Sigmoid colon (tissue), 7 donors: ENCODE measurements at regions of chr22 and their contacts with region 1.

Region 1: GRCh38 chr22:31107178-31107893 is at the start of gene SELENOM:
- DNase-seq: peak; percentile 99
- H3K4me3 ChIP-seq: peak within 1 kb of the TSS; percentile 73 to 98 (median 92)
- H3K27ac ChIP-seq: peak within 1 kb of the TSS; percentile 96 to 100 (median 99)
- H3K4me1 ChIP-seq: peaks cover 0 to 47% (median 39%) of the 10 kb centered on the region in 4 donors
- H3K27me3 ChIP-seq: no peaks in the 10 kb centered on the region
- CTCF ChIP-seq: peak; percentile 90 to 98 (median 94)
- EP300 ChIP-seq: peak in 1 of 4 donors; percentile 13
- POLR2A ChIP-seq: peak; percentile 86 to 96
- total RNA-seq, gene SELENOM: 868 to 1,938 (median 1,638) TPM

Region 2: DNA sequence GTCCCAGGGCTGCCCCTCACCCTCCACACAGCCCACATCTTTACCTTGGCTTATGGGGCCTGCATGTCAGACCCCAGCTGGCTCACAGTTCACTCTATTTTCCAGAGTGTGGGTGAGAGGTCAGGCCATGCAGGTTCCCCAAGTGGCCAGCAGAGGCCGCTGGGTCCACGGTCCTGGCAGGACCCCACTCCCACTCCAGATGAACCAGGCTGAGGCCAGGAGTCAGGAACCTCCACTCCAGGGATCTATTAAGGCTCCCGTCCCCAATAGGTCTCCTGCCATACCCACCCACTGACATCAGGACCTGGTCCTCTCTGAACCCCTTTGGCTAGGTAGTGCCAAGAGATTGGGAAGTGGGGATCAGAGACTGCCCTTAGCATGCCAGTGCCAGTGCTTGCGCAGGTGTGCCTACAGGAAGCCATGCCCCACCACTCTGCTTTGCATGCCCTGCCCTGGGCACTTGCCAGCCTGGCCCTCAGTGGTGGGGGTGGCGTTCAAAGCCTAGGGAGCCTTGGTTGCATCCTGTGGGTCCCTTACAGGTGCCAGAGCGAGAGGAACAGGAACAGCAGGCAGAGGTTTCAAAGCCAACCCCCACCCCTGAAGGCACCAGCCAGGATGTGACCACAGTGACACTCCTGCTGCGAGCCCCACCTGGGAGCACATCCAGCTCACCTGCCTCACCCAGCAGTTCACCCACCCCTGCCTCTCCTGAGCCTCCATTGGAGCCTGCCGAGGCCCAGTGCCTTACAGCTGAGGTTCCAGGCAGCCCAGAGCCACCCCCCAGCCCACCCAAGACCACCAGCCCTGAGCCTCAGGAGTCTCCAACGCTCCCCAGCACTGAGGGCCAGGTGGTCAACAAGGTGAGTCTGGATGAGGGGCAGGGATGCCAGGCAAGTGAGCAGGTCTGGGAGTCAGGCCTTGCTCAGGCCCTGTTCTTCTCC is 17.9 kb before region 1 on chr22:
- intact Hi-C with region 1: loop called (anchors 1 kb)
- DNase-seq: peak; percentile 91
- H3K4me3 ChIP-seq: peak overlapping the region; percentile 35 to 75 (median 70)
- H3K27ac ChIP-seq: peak overlapping the region; percentile 96 to 100 (median 99)
- H3K4me1 ChIP-seq: peaks cover 0 to 70% (median 59%) of the 10 kb centered on the region in 4 donors
- H3K27me3 ChIP-seq: no peaks in the 10 kb centered on the region
- CTCF ChIP-seq: peak; percentile 79 to 90 (median 84)
- EP300 ChIP-seq: no peak
- POLR2A ChIP-seq: no peak

Region 3: GRCh38 chr22:31127181-31127772 is 19.9 kb after region 1 on chr22:
- intact Hi-C with region 1: no loop called
- DNase-seq: no peak
- H3K4me3 ChIP-seq: no peak overlapping the region
- H3K27ac ChIP-seq: no peak overlapping the region
- H3K4me1 ChIP-seq: peaks cover 0 to 14% (median 13%) of the 10 kb centered on the region in 4 donors
- H3K27me3 ChIP-seq: no peaks in the 10 kb centered on the region
- CTCF ChIP-seq: no peak
- EP300 ChIP-seq: no peak
- POLR2A ChIP-seq: no peak

Region 4: GRCh38 chr22:31148953-31149627 is 41.8 kb after region 1 on chr22:
- intact Hi-C with region 1: loop called (anchors 1 kb)
- DNase-seq: peak; percentile 89
- H3K4me3 ChIP-seq: no peak overlapping the region
- H3K27ac ChIP-seq: peak overlapping the region; percentile 59 to 73 (median 68)
- H3K4me1 ChIP-seq: peaks cover 0 to 13% (median 5%) of the 10 kb centered on the region in 4 donors
- H3K27me3 ChIP-seq: no peaks in the 10 kb centered on the region
- CTCF ChIP-seq: peak; percentile 85 to 96 (median 88)
- EP300 ChIP-seq: no peak
- POLR2A ChIP-seq: no peak

Region 5: DNA sequence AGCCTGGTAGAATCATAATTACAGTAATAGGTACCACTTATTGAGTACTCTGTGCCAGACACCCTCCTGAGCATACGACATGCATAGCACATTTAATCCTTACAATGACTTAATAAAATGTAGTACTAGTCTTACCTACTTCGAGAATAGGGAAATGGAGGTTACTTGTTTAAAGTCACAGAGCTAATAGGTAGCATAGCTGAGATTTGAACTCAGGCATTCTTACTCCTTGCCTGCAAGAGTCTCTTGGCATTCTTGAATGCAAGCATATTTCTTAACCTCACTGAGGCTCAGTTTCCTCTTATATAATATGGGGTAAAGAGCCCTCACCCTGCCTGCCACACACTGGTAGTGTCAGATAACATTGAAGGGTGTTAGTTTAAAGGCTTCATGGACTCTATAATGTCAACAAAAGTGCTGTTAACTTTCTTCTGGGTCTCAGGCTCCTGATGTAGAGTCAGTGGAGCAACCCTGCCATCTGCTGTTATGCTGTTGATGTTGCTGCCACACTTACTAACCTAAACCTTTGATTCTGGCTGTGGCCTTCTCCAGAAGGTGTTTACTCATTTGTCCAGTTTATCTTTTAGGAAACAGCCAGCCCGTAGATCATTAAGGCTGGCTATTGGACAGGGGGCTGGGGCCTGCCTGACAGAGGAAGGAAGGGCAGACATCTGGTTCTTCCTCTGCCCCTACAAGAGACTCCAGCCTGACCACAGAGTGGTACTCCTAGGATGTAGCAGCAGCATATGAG is 123.7 kb after region 1 on chr22:
- intact Hi-C with region 1: loop called (anchors 2 kb)
- DNase-seq: no peak
- H3K4me3 ChIP-seq: no peak overlapping the region
- H3K27ac ChIP-seq: peak overlapping the region; percentile 33 to 76 (median 72)
- H3K4me1 ChIP-seq: peaks cover 0 to 55% (median 39%) of the 10 kb centered on the region in 4 donors
- H3K27me3 ChIP-seq: no peaks in the 10 kb centered on the region
- CTCF ChIP-seq: peak; percentile 48 to 70 (median 66)
- EP300 ChIP-seq: no peak
- POLR2A ChIP-seq: no peak

Region 6: GRCh38 chr22:31290494-31291471 is 183.4 kb after region 1 on chr22:
- intact Hi-C with region 1: loop called (anchors 5 kb)
- DNase-seq: peak; percentile 98
- H3K4me3 ChIP-seq: peak overlapping the region; percentile 71 to 87 (median 82)
- H3K27ac ChIP-seq: peak overlapping the region; percentile 92 to 98 (median 97)
- H3K4me1 ChIP-seq: peaks cover 0 to 74% (median 68%) of the 10 kb centered on the region in 4 donors
- H3K27me3 ChIP-seq: no peaks in the 10 kb centered on the region
- CTCF ChIP-seq: no peak
- EP300 ChIP-seq: peak in 1 of 4 donors; percentile 22
- POLR2A ChIP-seq: peak; percentile 78 to 82